ENCODE measurements at regions of chr2 and their contacts with region 1.

Region 1: GRCh38 chr2:27356382-27357181 is at the start of gene GTF3C2:
- DNase-seq: peak; percentile 96
- ATAC-seq: peak; percentile 82
- H3K4me3 Mint-ChIP-seq: peak within 1 kb of the TSS; percentile 98
- H3K27ac Mint-ChIP-seq: peak within 1 kb of the TSS; percentile 100
- H3K4me1 Mint-ChIP-seq: peaks cover 50% of the 10 kb centered on the region
- H3K27me3 Mint-ChIP-seq: no peaks in the 10 kb centered on the region
- total RNA-seq, gene GTF3C2: 60.3 to 70.2 TPM

Region 2: DNA sequence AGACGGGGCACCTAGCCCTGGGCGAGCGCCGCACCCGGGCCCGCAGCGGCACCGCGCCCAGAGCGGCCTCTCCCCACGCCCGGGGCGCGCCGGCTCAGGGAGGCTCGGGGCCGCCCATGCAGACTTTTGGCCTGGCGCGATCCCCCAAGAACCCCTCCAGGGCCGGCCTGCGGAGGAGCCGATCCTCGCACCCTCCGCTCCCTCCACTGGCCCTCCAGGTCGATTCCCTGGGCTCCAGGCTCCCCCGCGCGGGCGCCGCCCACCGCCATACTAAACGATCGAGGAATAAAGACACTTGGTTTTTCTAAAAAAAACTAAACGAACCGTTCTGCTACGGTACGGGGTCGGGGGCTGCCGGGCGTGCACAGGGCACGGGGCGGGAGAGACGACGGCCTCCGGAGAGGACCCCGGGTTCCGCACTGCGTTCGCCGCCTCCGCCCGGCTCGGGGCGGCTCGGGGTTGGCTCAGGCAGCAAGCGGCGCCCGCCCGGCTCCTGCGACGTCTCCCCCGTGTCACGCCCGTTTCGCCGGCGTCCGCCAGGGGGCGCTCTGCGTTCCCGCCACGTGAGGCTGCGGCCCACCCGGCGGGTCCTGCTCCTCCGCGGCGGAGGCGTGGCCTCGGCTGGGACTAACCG is 270.4 kb before region 1 on chr2:
- CTCF ChIA-PET with region 1: no interaction called
- POLR2A ChIA-PET with region 1: no interaction called
- intact Hi-C with region 1: loop called in 1 of 2 experiments (anchors 1 kb)
- DNase-seq: peak; percentile 98
- ATAC-seq: peak; percentile 89
- H3K4me3 Mint-ChIP-seq: peak overlapping the region; percentile 77
- H3K27ac Mint-ChIP-seq: peak overlapping the region; percentile 82
- H3K4me1 Mint-ChIP-seq: peaks cover 24% of the 10 kb centered on the region
- H3K27me3 Mint-ChIP-seq: no peaks in the 10 kb centered on the region

Region 3: GRCh38 chr2:27217217-27218121 is 139.1 kb before region 1 on chr2 and contains the start of gene CAD:
- CTCF ChIA-PET with region 1: no interaction called
- POLR2A ChIA-PET with region 1: no interaction called
- intact Hi-C with region 1: loop called (anchors 1 kb)
- DNase-seq: peak; percentile 94
- ATAC-seq: peak; percentile 90
- H3K4me3 Mint-ChIP-seq: peak within 1 kb of the TSS; percentile 93
- H3K27ac Mint-ChIP-seq: peak within 1 kb of the TSS; percentile 87
- H3K4me1 Mint-ChIP-seq: peaks cover 37% of the 10 kb centered on the region
- H3K27me3 Mint-ChIP-seq: no peaks in the 10 kb centered on the region
- total RNA-seq, gene CAD: 107 to 147 TPM

Region 4: DNA sequence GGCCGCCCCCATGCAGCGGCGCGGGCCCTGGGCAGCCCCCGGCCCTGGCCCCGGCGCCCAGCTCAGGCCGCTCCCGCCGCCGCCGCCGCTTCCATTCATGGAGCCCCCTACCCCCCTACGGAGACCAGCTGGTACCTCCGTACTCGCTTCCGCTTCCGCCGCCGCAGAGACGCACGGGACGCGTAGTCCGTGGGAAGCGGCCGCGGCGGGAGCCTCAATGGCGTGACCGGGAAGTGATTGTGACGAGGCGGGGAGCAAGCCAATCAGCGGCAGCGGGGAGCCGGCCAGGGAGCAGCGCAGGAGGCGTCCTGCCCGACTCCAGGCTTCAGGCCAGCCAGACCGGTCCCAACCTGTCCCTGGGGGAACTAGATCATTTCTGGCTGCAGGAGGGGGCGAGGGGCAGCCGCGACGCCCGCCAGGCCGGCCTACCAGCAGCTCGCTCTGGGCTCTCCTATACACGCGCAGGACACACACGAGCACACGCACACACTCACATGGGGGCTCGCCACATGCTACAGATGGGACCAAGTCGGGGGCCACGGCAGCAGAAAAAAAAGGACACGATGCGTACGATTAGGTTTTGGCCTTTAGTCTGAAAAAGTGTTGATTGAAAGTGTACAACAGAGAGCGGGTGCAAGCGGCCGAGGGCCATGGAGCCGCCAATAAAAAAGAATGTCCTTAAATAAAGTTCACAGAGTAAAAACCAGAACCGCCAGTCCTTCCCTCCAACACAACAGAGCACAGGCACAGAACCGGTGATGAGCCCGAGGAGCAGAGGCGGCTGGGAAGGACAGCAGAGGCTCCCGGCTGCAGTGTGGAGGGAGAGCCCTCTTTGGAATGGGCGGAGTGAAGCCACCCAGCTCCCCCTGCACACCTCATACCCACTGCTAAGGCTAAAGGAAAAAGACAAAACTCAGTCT is 24.3 kb after region 1 on chr2 and contains the start of gene ZNF513:
- CTCF ChIA-PET with region 1: no interaction called
- POLR2A ChIA-PET with region 1: no interaction called
- intact Hi-C with region 1: loop called in 1 of 2 experiments (anchors 1 kb)
- DNase-seq: peak; percentile 95
- ATAC-seq: peak; percentile 91
- H3K4me3 Mint-ChIP-seq: peak within 1 kb of the TSS; percentile 89
- H3K27ac Mint-ChIP-seq: peak within 1 kb of the TSS; percentile 96
- H3K4me1 Mint-ChIP-seq: peaks cover 29% of the 10 kb centered on the region
- H3K27me3 Mint-ChIP-seq: no peaks in the 10 kb centered on the region
- total RNA-seq, gene ZNF513: 7.7 to 10.5 TPM

Region 5: DNA sequence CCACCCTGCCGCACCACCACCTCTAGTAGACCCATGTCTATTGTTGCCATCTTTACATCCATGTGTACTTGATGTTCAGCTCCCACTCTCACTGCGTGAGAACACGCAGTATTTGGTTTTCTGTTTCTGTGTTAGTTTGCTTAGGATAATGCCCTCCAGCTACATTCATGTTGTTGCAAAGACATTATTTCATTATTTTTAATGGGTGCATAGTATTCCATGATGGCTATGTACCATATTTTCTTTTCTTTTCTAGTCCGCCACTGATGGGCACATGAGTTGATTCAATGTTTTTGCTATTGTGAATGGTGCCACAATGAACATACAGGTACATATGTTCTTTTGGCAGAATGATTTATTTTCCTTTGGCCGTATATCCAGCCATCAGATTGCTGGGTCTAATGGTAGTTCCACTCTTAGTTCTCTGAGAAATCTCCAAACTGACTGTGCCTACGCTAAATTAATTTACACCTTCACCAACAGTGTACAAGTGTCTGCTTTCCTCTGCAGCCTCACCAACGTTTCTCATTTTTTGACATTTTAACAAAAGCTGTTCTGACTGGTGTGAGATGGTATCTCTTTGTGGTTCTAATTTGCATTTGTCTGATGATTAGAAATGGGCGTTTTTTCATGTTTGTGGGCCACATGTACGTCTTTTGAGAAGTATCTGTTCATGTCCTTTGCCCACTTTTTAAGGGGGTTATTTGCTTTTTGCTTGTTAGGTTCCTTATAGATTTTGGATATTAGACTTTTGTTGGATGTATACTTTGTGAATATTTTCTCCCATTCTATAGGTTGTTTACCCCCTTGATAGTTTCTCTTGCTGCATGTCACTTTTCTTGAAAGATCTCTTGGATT is 34.5 kb after region 1 on chr2:
- CTCF ChIA-PET with region 1: no interaction called
- POLR2A ChIA-PET with region 1: no interaction called
- intact Hi-C with region 1: no loop called
- DNase-seq: no peak
- ATAC-seq: peak; percentile 70
- H3K4me3 Mint-ChIP-seq: peak overlapping the region; percentile 16
- H3K27ac Mint-ChIP-seq: peak overlapping the region; percentile 77
- H3K4me1 Mint-ChIP-seq: peaks cover 26% of the 10 kb centered on the region
- H3K27me3 Mint-ChIP-seq: no peaks in the 10 kb centered on the region

Region 6: DNA sequence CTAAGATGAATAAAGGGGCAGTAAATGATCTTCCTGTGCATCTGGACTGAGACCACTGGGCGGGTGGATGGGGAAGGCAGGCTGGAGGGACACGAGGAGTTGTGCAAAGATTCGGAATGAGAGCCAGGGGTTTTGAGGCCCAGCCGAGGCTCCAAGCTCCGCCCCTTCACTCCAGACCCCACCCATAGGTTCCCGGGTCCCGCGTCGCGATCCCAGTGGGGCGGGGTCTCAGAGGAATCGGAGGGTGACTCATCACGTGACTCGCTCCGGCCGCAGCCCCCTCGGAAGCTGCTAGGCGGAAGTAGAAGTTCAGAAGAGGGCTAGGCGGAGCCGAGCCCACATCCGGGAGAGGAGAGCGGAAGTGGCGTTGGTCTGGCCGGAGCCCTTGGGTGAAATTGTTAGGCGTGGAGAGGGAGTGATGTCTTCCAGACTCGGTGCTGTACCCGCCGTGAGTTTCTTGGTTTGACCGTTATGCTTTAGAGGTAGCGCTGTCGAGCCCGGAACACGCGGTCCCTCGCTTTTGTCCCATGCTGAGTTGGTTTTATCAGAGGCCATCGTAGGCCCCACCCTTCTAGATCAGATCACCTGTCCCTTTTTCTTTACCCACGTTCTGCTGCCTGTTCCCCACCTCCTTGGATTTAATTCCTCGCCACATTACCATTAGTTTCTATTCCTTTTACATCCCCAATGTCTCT is 226.3 kb after region 1 on chr2 and contains the start of gene ZNF512:
- CTCF ChIA-PET with region 1: interaction called, 3 read pairs
- POLR2A ChIA-PET with region 1: no interaction called
- intact Hi-C with region 1: loop called in 1 of 2 experiments (anchors 5 kb)
- DNase-seq: peak; percentile 91
- ATAC-seq: peak; percentile 92
- H3K4me3 Mint-ChIP-seq: peak within 1 kb of the TSS; percentile 98
- H3K27ac Mint-ChIP-seq: peak within 1 kb of the TSS; percentile 98
- H3K4me1 Mint-ChIP-seq: peaks cover 47% of the 10 kb centered on the region
- H3K27me3 Mint-ChIP-seq: no peaks in the 10 kb centered on the region
- total RNA-seq, gene ZNF512: 31.8 to 34.5 TPM